K562 (cell line): ENCODE measurements at regions of chr12 and their contacts with region 1.

Region 1: DNA sequence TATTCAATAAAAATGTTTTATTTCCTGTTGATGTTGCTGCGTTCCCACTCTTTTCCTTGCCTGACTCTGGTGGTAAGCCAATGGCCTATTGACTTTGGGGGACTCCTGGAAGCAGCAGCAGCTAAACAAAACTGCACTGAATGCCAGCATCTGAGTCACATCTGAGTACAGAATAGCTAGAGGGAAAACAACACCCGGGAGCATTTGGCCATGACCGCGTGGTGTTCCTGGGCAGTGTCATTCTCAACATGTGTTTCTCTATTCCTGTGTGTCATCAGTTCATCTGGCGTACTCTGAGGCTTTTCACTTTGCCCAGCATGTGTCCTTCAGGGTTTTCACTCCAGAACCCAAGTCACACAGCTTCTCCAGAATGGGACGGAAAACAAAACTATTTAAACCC is 238.8 kb downstream of the PAWR start:
- DNase-seq: no peak
- ATAC-seq: no peak
- H3K4me3 ChIP-seq: no peak overlapping the region
- H3K27ac ChIP-seq: no peak overlapping the region
- H3K4me1 ChIP-seq: no peaks in the 10 kb centered on the region
- H3K27me3 ChIP-seq: no peaks in the 10 kb centered on the region
- CTCF ChIP-seq: no peak
- EP300 ChIP-seq: no peak
- POLR2A ChIP-seq: no peak
- RAD21 ChIP-seq: no peak

Region 2: DNA sequence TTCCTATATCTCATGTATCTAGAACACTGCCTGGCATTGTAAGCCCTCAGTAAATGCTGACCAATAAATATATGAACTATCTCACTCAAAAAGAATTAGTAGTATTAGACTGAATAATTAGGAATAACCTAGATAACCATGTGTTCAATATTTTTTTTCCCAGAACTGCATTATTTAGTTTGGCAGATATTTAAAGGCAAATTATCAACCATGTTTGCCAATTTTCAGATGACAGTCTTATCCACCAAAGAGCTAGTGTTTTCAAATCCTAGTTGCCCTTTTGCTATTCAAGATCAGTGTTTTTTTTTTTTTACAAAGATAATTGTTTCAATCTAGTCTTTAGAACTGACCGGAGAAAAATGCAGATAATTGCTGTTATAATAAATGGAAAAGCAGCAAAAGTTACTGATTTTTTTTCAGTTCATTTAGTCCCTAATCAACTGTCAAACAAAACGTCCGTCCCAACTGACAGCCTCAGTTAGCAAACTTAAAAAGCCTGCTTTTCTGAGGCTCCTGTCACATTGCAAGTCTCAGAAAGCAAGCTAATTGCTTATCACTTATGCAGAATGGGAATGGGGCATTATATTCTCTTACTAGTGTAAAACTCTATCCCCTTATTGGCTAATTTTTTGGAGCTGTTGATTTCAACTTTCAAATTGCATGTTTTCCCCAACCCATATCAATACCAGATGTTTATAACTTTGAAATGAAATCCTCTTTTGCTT is 35.6 kb after region 1 on chr12:
- CTCF ChIA-PET with region 1: no interaction called
- POLR2A ChIA-PET with region 1: interaction called, 4 read pairs
- in situ Hi-C with region 1: loop called (anchors 5 kb)
- intact Hi-C with region 1: no loop called
- DNase-seq: no peak
- ATAC-seq: no peak
- H3K4me3 ChIP-seq: no peak overlapping the region
- H3K27ac ChIP-seq: no peak overlapping the region
- H3K4me1 ChIP-seq: no peaks in the 10 kb centered on the region
- H3K27me3 ChIP-seq: no peaks in the 10 kb centered on the region
- CTCF ChIP-seq: no peak
- EP300 ChIP-seq: no peak
- POLR2A ChIP-seq: no peak
- RAD21 ChIP-seq: no peak